Tibial artery (tissue), 4 donors: ENCODE measurements at regions of chr1 and their contacts with region 1.

Region 1: DNA sequence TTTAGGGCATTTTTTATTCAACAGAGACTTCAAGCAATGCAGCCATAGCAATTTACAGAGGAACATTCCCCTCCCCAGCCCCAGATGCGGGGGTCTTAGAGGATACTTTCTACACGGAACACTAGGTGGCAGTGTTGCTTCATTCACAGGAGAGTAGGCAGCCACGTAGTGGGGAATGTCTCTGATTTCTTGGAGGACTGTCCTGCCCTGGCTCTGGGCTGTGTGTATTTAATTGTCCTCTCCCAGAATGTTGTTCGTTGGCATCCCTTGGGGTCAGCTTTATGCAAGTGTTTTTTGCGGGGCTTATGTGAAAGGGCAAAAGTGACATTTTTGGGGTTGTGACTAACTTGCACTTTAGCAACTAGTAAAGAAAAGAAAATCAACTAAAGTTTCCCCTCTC is 96.9 kb downstream of the PAPPA2 start:
- DNase-seq: peak; percentile 67 to 73
- H3K4me3 ChIP-seq: no peak overlapping the region
- H3K27ac ChIP-seq: no peak overlapping the region
- H3K4me1 ChIP-seq: peaks cover 0 to 9% (median 4%) of the 10 kb centered on the region in 4 donors
- H3K27me3 ChIP-seq: peaks cover 0 to 12% of the 10 kb centered on the region in 2 donors
- CTCF ChIP-seq: peak; percentile 88 to 94

Region 2: GRCh38 chr1:176517484-176517883 is 42.4 kb before region 1 on chr1:
- intact Hi-C with region 1: no loop called
- DNase-seq: no peak
- H3K4me3 ChIP-seq: no peak overlapping the region
- H3K27ac ChIP-seq: no peak overlapping the region
- H3K4me1 ChIP-seq: no peaks in the 10 kb centered on the region
- H3K27me3 ChIP-seq: no peaks in the 10 kb centered on the region
- CTCF ChIP-seq: no peak

Region 3: DNA sequence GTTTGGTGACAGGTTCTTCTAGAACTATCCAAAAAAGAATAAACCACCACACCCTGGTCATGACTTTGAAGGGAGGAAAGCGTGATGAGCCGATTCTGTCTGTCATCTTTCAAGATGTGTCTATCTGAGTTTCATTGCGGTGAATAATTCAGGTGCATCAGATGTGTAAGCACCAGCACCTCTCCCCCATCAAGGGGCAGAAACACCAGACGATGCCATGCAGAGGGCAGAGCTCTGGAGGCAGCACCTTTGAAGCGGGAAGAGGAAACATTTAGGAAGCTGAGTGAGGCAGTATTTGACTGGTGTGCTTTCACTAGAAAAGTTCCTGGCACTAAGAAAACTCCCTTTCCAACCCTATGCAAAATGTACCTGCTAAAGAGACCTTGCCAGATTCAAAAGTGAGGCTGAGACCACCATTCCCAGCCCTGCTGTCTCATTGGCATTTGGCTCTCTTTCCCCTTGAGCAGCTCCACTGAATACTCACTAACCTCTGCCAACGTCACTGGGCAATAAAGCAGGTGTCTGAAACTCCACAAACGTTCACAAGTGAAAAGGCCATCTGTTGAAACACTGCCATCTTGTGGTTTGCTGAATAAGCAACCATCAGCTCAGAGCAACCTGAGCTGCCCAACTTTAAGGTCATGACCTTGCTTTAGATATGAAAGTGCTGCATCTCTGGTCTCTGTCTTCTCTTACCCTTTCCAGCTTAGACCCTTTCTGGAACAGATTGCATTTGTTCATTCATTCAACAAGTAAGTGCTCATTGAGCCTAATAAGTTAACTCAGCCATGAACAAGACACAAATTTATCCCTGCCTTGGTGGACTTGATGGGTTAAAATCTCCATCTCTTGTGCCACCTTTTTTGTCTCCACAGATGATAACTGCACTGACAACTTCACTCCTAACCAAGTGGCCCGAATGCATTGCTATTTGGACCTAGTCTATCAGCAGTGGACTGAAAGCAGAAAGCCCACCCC is 131.7 kb after region 1 on chr1:
- intact Hi-C with region 1: loop called (anchors 2 kb)
- DNase-seq: no peak
- H3K4me3 ChIP-seq: no peak overlapping the region
- H3K27ac ChIP-seq: no peak overlapping the region
- H3K4me1 ChIP-seq: peaks cover 0 to 6% (median 0%) of the 10 kb centered on the region in 4 donors
- H3K27me3 ChIP-seq: no peaks in the 10 kb centered on the region
- CTCF ChIP-seq: peak; percentile 65 to 69

Region 4: DNA sequence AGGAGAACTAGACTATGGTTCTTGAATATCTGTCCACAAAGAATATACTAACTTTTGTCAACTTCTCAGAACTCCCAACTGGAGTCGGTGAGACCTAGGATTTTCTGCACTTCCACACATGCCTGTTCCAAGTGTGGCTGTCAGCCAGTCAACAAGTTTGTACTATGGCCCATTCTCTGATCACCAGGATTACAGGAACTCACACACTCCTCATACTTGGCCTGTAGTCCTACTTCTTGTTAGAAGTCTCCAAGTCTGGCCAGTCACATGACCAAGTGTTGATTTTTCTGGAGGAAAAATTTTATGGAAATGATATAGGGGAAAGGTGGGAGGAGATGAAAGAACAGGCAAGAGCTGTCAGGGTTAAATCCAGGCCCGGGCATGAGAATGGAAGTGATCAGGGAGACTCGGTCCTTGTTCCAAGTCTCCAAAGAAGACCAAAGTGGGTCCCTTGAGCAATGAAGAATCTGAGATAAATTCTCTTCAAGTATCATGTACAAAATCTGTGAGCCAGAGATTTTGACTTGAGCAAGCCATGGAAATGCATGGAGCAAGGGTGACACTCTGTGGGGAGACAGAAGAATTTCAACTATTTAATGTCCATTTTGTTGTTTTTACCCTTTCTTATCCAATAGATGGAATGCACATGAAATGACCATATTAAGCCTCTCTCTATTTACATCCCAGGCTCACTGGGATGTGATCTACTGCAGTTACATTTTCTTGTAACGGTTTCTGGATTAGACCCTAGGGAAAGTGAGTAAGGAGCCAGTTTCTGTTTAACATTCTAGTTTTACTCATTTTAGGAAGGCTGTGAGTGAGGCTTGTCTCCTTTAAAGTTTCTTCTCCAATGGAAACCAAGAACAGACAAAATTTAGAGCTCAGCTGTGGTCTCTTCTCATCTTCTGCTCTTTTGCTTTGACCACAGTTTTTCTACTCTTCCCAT is 283.7 kb after region 1 on chr1:
- intact Hi-C with region 1: loop called (anchors 5 kb)
- DNase-seq: peak in 1 of 2 donors; percentile 38
- H3K4me3 ChIP-seq: no peak overlapping the region
- H3K27ac ChIP-seq: peak overlapping the region in 1 of 2 donors; percentile 12
- H3K4me1 ChIP-seq: peaks cover 0 to 12% (median 7%) of the 10 kb centered on the region in 4 donors
- H3K27me3 ChIP-seq: no peaks in the 10 kb centered on the region
- CTCF ChIP-seq: peak; percentile 80 to 81

Region 5: DNA sequence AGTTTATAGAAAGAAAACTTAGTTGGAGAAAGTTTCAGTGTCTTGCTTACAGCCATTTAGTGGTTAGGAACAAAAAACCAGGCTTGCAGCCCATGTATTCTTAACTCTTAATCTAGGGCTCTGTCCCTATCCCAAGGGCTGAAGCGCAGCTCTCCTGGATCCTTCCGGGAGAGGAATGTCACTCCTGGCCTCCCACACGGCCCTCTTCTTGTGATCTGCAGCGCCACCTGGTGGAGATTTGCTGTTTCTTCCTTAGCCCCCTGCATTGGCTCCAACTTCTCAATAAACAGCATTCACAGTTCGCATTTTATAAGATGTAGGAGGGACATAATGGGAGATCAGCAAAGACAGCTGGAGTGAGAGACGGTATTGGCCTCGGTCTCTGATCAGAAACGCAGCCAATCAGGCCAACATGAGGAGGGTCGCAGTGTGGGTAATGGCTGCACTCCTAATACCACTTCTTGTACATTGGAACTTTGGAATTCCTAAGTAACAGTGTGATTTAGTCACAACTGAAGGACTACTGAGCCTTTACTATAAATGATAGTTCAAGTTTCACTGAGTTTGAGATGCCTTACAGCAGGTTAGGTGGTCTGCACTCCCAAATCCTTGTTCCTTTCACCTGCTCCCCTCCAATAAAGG is 321.2 kb after region 1 on chr1:
- intact Hi-C with region 1: loop called (anchors 10 kb)
- DNase-seq: peak; percentile 39 to 72
- H3K4me3 ChIP-seq: no peak overlapping the region
- H3K27ac ChIP-seq: no peak overlapping the region
- H3K4me1 ChIP-seq: peaks cover 0 to 3% (median 0%) of the 10 kb centered on the region in 4 donors
- H3K27me3 ChIP-seq: no peaks in the 10 kb centered on the region
- CTCF ChIP-seq: peak; percentile 71 to 73